Activated CD4-positive, alpha-beta T cell treated with anti-CD3 and anti-CD28 coated beads for 36 hours (primary cell): ENCODE measurements at regions of chr1 and their contacts with region 1.

Region 1: GRCh38 chr1:29849038-29849750 is 612.9 kb downstream of the PTPRU start:
- DNase-seq: peak; percentile 69
- ATAC-seq: peak; percentile 73
- H3K4me3 Mint-ChIP-seq: no peak overlapping the region
- H3K27ac Mint-ChIP-seq: no peak overlapping the region
- H3K4me1 Mint-ChIP-seq: no peaks in the 10 kb centered on the region
- H3K27me3 Mint-ChIP-seq: peaks cover 13% of the 10 kb centered on the region

Region 2: DNA sequence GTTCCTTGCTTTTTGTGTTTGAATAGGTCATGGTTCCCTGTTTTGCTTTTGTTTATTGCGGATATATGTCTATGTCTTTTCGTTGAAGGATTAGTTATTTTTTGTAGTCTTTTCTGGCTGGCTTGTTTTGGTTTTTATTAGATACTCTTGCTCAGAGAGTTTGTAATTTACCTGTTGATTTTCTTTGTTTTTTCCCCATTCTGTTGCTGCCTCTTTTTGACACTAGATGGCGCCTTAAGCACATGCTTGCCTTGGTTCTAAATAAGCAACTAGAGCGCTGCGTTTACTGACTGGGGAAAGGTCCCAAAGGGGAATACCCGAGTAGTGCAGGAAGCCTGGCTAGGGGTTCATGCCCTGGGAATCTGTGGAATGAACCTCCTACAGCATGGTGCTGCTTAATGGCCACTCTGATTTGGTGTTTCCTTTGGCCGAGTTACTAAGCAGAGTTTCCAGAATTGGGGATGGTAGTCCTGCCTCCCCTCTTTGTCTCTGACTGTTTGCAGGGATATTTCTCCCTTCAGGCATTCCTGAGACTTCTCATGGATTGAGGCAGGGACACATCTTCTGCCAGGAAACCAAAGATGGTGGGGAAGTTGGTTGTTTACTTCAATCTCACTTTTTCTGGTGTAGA is 469.6 kb before region 1 on chr1:
- CTCF ChIA-PET with region 1: no interaction called
- POLR2A ChIA-PET with region 1: no interaction called
- intact Hi-C with region 1: loop called in 1 of 2 experiments (anchors 2 kb)
- DNase-seq: peak; percentile 24
- ATAC-seq: no peak
- H3K4me3 Mint-ChIP-seq: no peak overlapping the region
- H3K27ac Mint-ChIP-seq: no peak overlapping the region
- H3K4me1 Mint-ChIP-seq: no peaks in the 10 kb centered on the region
- H3K27me3 Mint-ChIP-seq: peaks cover 37% of the 10 kb centered on the region

Region 3: GRCh38 chr1:29703596-29704370 is 145.4 kb before region 1 on chr1:
- CTCF ChIA-PET with region 1: no interaction called
- POLR2A ChIA-PET with region 1: no interaction called
- intact Hi-C with region 1: loop called (anchors 1 to 5 kb)
- DNase-seq: no peak
- ATAC-seq: no peak
- H3K4me3 Mint-ChIP-seq: no peak overlapping the region
- H3K27ac Mint-ChIP-seq: no peak overlapping the region
- H3K4me1 Mint-ChIP-seq: peaks cover 4% of the 10 kb centered on the region
- H3K27me3 Mint-ChIP-seq: peaks cover 40% of the 10 kb centered on the region

Region 4: GRCh38 chr1:29793101-29793546 is 56.1 kb before region 1 on chr1:
- CTCF ChIA-PET with region 1: interaction called, 7 read pairs
- POLR2A ChIA-PET with region 1: no interaction called
- intact Hi-C with region 1: loop called in 1 of 2 experiments (anchors 1 kb)
- DNase-seq: peak; percentile 88
- ATAC-seq: peak; percentile 39
- H3K4me3 Mint-ChIP-seq: no peak overlapping the region
- H3K27ac Mint-ChIP-seq: no peak overlapping the region
- H3K4me1 Mint-ChIP-seq: no peaks in the 10 kb centered on the region
- H3K27me3 Mint-ChIP-seq: peaks cover 5% of the 10 kb centered on the region